ENCODE measurements at regions of chr1 and their contacts with region 1.

Region 1: GRCh38 chr1:197868751-197869489 is 33.5 kb upstream of the C1orf53 start:
- DNase-seq: peak; percentile 56
- H3K4me3 Mint-ChIP-seq: no peak overlapping the region
- H3K27ac Mint-ChIP-seq: no peak overlapping the region
- H3K4me1 Mint-ChIP-seq: no peaks in the 10 kb centered on the region
- H3K27me3 Mint-ChIP-seq: peaks cover 11% of the 10 kb centered on the region

Region 2: GRCh38 chr1:197526736-197527371 is 342.1 kb before region 1 on chr1:
- CTCF ChIA-PET with region 1: interaction called, 24 read pairs
- DNase-seq: no peak
- H3K4me3 Mint-ChIP-seq: no peak overlapping the region
- H3K27ac Mint-ChIP-seq: no peak overlapping the region
- H3K4me1 Mint-ChIP-seq: no peaks in the 10 kb centered on the region
- H3K27me3 Mint-ChIP-seq: no peaks in the 10 kb centered on the region

Region 3: GRCh38 chr1:197614916-197615692 is 253.8 kb before region 1 on chr1:
- CTCF ChIA-PET with region 1: interaction called, 76 read pairs
- DNase-seq: peak; percentile 33
- H3K4me3 Mint-ChIP-seq: no peak overlapping the region
- H3K27ac Mint-ChIP-seq: no peak overlapping the region
- H3K4me1 Mint-ChIP-seq: no peaks in the 10 kb centered on the region
- H3K27me3 Mint-ChIP-seq: no peaks in the 10 kb centered on the region

Region 4: DNA sequence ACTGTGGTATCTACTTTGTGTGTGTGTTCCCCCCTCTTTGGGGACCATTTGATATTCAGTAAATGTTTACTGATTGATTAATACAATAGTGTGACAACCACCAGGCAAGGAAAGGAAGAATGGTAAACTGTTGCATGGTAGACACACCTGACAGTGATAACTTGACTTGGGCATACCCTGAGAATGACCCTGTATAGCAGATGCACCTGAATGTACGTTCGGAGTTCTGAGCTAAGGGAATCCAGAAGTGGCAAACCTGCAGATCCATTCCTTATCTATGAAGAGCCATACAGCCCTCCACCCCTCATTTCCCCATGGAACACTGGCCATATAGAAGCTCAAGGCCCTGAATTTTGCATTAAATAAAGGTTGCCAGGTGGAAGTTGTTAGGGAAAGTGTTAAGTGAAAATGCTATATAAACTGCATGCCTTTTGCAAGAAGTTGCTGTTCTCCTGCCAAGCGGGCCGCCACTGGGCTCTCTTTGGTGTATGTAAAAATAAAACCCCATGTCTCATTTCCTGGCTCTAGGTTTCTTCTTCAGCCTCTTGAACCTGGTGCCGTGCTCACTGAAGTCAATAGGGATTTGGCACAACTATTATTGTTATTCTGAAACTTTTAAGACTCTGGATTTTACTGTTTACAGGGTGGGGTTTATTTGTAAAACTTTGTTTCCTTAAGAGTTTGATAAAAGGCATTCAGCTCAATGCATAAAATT is 61.0 kb before region 1 on chr1:
- CTCF ChIA-PET with region 1: no interaction called
- DNase-seq: no peak
- H3K4me3 Mint-ChIP-seq: no peak overlapping the region
- H3K27ac Mint-ChIP-seq: no peak overlapping the region
- H3K4me1 Mint-ChIP-seq: no peaks in the 10 kb centered on the region
- H3K27me3 Mint-ChIP-seq: no peaks in the 10 kb centered on the region

Region 5: GRCh38 chr1:197845886-197846285 is 23.0 kb before region 1 on chr1:
- CTCF ChIA-PET with region 1: no interaction called
- DNase-seq: no peak
- H3K4me3 Mint-ChIP-seq: no peak overlapping the region
- H3K27ac Mint-ChIP-seq: no peak overlapping the region
- H3K4me1 Mint-ChIP-seq: no peaks in the 10 kb centered on the region
- H3K27me3 Mint-ChIP-seq: peaks cover 4% of the 10 kb centered on the region